Naive thymus-derived CD8-positive, alpha-beta T cell (primary cell): ENCODE measurements at regions of chr19 and their contacts with region 1.

Region 1: GRCh38 chr19:41327576-41328156 is 17.7 kb downstream of the CCDC97 start:
- DNase-seq: peak; percentile 60 to 90 (median 74)
- ATAC-seq: peak; percentile 62 to 75
- H3K4me3 Mint-ChIP-seq: peak overlapping the region; percentile 75 to 88 (median 82)
- H3K27ac Mint-ChIP-seq: peak overlapping the region; percentile 93 to 99 (median 98)
- H3K4me1 Mint-ChIP-seq: peaks cover 54 to 89% (median 75%) of the 10 kb centered on the region in 4 donors
- H3K27me3 Mint-ChIP-seq: peaks cover 0 to 2% (median 0%) of the 10 kb centered on the region in 5 donors

Region 2: GRCh38 chr19:41316306-41316920 is 11.3 kb before region 1 on chr19:
- POLR2A ChIA-PET with region 1: interaction called, 10 read pairs
- DNase-seq: no peak
- ATAC-seq: no peak
- H3K4me3 Mint-ChIP-seq: peak overlapping the region in 2 of 10 donors; percentile 15 to 45
- H3K27ac Mint-ChIP-seq: peak overlapping the region in 4 of 10 donors; percentile 7 to 66 (median 21)
- H3K4me1 Mint-ChIP-seq: peaks cover 22 to 47% (median 30%) of the 10 kb centered on the region in 4 donors
- H3K27me3 Mint-ChIP-seq: no peaks in the 10 kb centered on the region